ENCODE measurements at regions of chr2 and their contacts with region 1.

Region 1: GRCh38 chr2:174487108-174487819 is 435 bp upstream of the GPR155 start:
- DNase-seq: peak; percentile 100
- ATAC-seq: peak; percentile 98 to 99 (median 99)
- H3K4me3 ChIP-seq: peak overlapping the region; percentile 68 to 99 (median 84)
- H3K27ac ChIP-seq: peak overlapping the region; percentile 84 to 96 (median 91)
- H3K4me1 ChIP-seq: peaks cover 0 to 30% (median 10%) of the 10 kb centered on the region in 9 donors
- H3K27me3 ChIP-seq: no peaks in the 10 kb centered on the region
- CTCF ChIP-seq: no peak

Region 2: GRCh38 chr2:174561283-174561971 is 74.2 kb after region 1 on chr2:
- intact Hi-C with region 1: loop called in 2 of 10 experiments (anchors 5 kb)
- DNase-seq: peak; percentile 76 to 87
- ATAC-seq: peak; percentile 90 to 97 (median 96)
- H3K4me3 ChIP-seq: peak overlapping the region in 2 of 10 donors; percentile 3 to 26
- H3K27ac ChIP-seq: peak overlapping the region in 9 of 10 donors; percentile 27 to 74 (median 62)
- H3K4me1 ChIP-seq: peaks cover 5 to 28% (median 18%) of the 10 kb centered on the region in 9 donors
- H3K27me3 ChIP-seq: no peaks in the 10 kb centered on the region
- CTCF ChIP-seq: no peak

Region 3: GRCh38 chr2:174593574-174594203 is 106.4 kb after region 1 on chr2:
- intact Hi-C with region 1: loop called in 1 of 10 experiments (anchors 10 kb)
- DNase-seq: peak in 1 of 2 donors; percentile 42
- ATAC-seq: peak in 6 of 8 donors; percentile 65 to 82 (median 75)
- H3K4me3 ChIP-seq: peak overlapping the region in 6 of 10 donors; percentile 14 to 52 (median 28)
- H3K27ac ChIP-seq: peak overlapping the region in 8 of 10 donors; percentile 31 to 98 (median 62)
- H3K4me1 ChIP-seq: peaks cover 0 to 97% (median 40%) of the 10 kb centered on the region in 9 donors
- H3K27me3 ChIP-seq: no peaks in the 10 kb centered on the region
- CTCF ChIP-seq: no peak

Region 4: GRCh38 chr2:174603280-174603679 is 116.0 kb after region 1 on chr2:
- intact Hi-C with region 1: loop called in 2 of 10 experiments (anchors 5 to 10 kb)
- DNase-seq: peak; percentile 30 to 76
- ATAC-seq: peak; percentile 89 to 94 (median 90)
- H3K4me3 ChIP-seq: no peak overlapping the region
- H3K27ac ChIP-seq: peak overlapping the region in 2 of 10 donors; percentile 24 to 98
- H3K4me1 ChIP-seq: peaks cover 0 to 73% (median 18%) of the 10 kb centered on the region in 9 donors
- H3K27me3 ChIP-seq: no peaks in the 10 kb centered on the region
- CTCF ChIP-seq: peak; percentile 16 to 79 (median 63)

Region 5: DNA sequence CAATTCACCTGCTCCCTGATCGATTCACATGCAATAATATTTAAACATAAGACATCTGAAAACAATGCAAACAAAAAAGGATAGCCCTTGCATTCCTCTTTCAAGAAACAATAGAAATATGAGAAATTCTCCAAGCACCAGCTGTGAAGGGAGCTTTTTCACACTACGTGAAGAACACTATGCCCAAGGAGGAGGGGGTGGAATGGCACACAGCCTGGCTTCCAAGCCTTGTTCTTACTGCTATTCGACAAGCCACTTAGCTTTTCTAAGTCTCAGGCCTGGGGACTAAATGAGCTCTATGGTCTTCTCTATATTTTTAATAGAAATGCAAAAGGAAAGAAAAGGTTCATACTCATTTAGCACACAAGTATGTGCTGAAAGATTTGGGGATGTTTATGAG is 369.2 kb after region 1 on chr2:
- intact Hi-C with region 1: no loop called
- DNase-seq: no peak
- ATAC-seq: no peak
- H3K4me3 ChIP-seq: no peak overlapping the region
- H3K27ac ChIP-seq: no peak overlapping the region
- H3K4me1 ChIP-seq: no peaks in the 10 kb centered on the region
- H3K27me3 ChIP-seq: no peaks in the 10 kb centered on the region
- CTCF ChIP-seq: no peak

Region 6: DNA sequence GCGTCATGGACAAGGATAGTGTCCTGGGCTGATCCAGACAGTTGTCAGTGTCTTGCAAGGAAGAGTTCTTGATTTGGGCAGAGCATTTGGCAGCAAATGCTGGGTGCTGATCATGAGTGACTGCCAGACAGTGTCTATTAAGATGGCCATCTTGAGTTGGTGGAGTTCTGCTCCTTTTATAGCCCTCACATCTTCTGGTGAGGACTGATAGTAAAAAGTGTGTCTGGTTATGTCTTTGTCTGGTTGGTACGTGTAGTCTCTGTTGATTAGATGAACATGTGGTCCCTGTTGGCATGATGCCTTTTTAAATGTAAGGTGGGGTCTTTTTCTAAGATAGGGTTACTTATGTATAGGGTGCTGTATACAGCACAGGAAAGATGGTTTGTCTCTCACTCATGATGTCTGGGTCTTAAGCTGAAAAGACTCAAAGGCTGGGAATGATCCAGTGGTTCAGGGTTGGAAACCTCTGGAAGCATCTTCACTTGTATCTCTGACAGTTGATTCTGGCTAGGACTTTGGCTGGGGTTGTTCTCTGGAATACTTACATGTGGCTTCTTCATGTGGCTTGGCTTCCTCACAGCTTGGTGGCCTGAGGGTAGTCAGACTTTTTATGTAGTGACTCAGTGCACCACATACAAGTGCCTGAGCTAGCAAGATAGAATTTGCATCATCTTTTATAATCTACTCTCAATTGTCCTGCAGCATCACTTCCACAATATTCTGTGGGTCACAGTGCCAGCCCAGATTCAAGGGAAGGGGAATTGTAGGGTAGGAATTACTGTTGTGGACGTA is 1793.8 kb after region 1 on chr2:
- intact Hi-C with region 1: no loop called
- DNase-seq: no peak
- ATAC-seq: no peak
- H3K4me3 ChIP-seq: no peak overlapping the region
- H3K27ac ChIP-seq: no peak overlapping the region
- H3K4me1 ChIP-seq: peaks cover 0 to 29% (median 10%) of the 10 kb centered on the region in 9 donors
- H3K27me3 ChIP-seq: no peaks in the 10 kb centered on the region
- CTCF ChIP-seq: no peak

Measured in heart right ventricle (tissue), 16 donors.